ENCODE measurements at regions of chr4 and their contacts with region 1.

Region 1: GRCh38 chr4:145618932-145619638 is at the start of gene MMAA:
- DNase-seq: peak; percentile 94
- H3K4me3 Mint-ChIP-seq: peak within 1 kb of the TSS; percentile 84
- H3K27ac Mint-ChIP-seq: peak within 1 kb of the TSS; percentile 90
- H3K4me1 Mint-ChIP-seq: peaks cover 34% of the 10 kb centered on the region
- H3K27me3 Mint-ChIP-seq: no peaks in the 10 kb centered on the region
- CTCF ChIP-seq: peak; percentile 37
- total RNA-seq, gene MMAA: 5.0 TPM in 2 replicates

Region 2: DNA sequence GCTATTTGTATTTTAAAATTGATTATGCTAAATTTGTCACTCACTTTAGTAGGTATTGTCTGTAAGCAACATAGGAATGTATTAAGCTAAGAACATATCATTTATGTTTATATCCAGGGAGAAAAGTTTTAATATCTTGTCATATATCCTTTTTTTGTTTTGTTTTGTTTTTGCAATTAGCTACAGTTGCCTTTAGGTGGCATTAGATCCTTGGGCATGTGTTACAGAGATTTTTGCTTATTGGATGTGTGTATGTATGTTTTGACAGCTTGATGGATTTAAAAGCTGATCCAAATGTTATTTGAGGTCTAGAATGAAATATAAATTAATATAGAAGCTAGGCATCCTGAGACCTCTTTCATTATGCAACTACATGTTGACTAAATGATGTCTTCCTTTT is 402.6 kb before region 1 on chr4:
- CTCF ChIA-PET with region 1: interaction called, 12 read pairs
- intact Hi-C with region 1: no loop called
- DNase-seq: no peak
- H3K4me3 Mint-ChIP-seq: no peak overlapping the region
- H3K27ac Mint-ChIP-seq: no peak overlapping the region
- H3K4me1 Mint-ChIP-seq: no peaks in the 10 kb centered on the region
- H3K27me3 Mint-ChIP-seq: no peaks in the 10 kb centered on the region
- CTCF ChIP-seq: peak; percentile 32

Region 3: DNA sequence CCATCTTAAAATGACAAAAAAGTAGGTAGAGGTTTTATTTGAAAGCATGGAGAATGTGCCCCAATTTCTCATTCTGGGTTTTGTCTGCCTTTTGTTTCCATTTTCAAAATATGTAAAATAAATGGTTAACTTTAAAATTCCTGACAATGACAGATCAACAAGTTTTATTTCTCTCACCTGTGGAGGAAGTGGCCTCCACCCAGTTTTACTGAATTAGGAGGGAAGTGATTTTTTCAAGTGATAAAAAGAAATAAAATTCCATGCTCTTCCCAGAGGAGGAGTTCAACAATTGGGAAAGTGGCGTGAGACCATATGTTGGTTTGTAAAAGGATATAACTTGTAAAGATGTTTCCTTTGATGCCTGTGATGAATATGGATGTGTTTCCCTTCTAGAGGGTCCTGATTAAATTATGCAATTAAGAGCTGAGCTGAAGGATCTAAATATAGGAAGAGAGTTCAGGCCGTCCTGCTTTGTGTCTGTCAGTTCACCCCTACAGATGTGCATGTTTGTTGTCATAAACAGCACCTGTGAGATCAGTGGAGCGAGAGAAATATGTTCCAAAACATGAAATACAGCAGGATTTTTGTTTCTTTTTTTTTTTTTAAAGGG is 117.9 kb before region 1 on chr4:
- CTCF ChIA-PET with region 1: no interaction called
- intact Hi-C with region 1: loop called (anchors 10 kb)
- DNase-seq: no peak
- H3K4me3 Mint-ChIP-seq: no peak overlapping the region
- H3K27ac Mint-ChIP-seq: no peak overlapping the region
- H3K4me1 Mint-ChIP-seq: no peaks in the 10 kb centered on the region
- H3K27me3 Mint-ChIP-seq: no peaks in the 10 kb centered on the region
- CTCF ChIP-seq: no peak

Region 4: GRCh38 chr4:145679991-145680455 is 60.9 kb after region 1 on chr4 and contains the start of gene C4orf51:
- CTCF ChIA-PET with region 1: no interaction called
- intact Hi-C with region 1: loop called (anchors 5 kb)
- DNase-seq: peak; percentile 31
- H3K4me3 Mint-ChIP-seq: peak within 1 kb of the TSS; percentile 50
- H3K27ac Mint-ChIP-seq: peak within 1 kb of the TSS; percentile 91
- H3K4me1 Mint-ChIP-seq: peaks cover 28% of the 10 kb centered on the region
- H3K27me3 Mint-ChIP-seq: no peaks in the 10 kb centered on the region
- CTCF ChIP-seq: no peak
- total RNA-seq, gene C4orf51: not detected in 2 replicates

Region 5: GRCh38 chr4:145732895-145733880 is 114.1 kb after region 1 on chr4:
- CTCF ChIA-PET with region 1: interaction called, 4 read pairs
- intact Hi-C with region 1: loop called (anchors 2 kb)
- DNase-seq: peak; percentile 91
- H3K4me3 Mint-ChIP-seq: peak overlapping the region; percentile 59
- H3K27ac Mint-ChIP-seq: peak overlapping the region; percentile 94
- H3K4me1 Mint-ChIP-seq: peaks cover 29% of the 10 kb centered on the region
- H3K27me3 Mint-ChIP-seq: no peaks in the 10 kb centered on the region
- CTCF ChIP-seq: no peak

Region 6: DNA sequence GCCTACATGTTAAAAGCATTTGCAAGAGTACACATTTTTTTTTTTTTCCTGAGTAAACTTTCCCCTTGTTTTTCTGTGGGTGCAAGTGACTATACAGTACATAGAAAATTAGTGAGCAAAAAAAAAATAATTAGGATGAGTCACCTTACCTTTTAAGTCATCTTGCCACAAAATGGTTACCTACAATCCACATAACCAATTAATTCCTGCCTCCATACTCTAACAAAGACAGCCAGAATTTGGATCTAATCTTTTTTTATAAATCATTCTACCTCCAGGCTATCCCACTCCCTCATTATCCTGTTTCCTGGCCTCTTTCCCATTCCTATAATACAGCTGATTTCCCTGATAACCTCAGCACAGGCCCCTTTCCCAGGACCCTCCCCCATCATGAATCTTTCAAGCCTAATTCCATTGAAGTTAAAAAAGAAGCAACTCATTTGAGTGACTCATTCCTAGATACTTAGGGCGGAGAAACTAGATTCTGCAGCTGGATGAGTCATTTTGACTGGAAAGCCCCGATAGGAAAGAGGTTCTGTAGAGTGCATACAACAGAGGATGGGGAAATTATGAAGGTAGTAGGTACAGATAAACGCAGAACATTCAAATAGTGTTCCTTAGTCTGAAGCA is 189.1 kb after region 1 on chr4:
- CTCF ChIA-PET with region 1: no interaction called
- intact Hi-C with region 1: loop called (anchors 2 kb)
- DNase-seq: peak; percentile 49
- H3K4me3 Mint-ChIP-seq: peak overlapping the region; percentile 46
- H3K27ac Mint-ChIP-seq: peak overlapping the region; percentile 94
- H3K4me1 Mint-ChIP-seq: peaks cover 34% of the 10 kb centered on the region
- H3K27me3 Mint-ChIP-seq: no peaks in the 10 kb centered on the region
- CTCF ChIP-seq: no peak

Measured in Calu3 (cell line).